ENCODE measurements at regions of chr11 and their contacts with region 1.

Region 1: DNA sequence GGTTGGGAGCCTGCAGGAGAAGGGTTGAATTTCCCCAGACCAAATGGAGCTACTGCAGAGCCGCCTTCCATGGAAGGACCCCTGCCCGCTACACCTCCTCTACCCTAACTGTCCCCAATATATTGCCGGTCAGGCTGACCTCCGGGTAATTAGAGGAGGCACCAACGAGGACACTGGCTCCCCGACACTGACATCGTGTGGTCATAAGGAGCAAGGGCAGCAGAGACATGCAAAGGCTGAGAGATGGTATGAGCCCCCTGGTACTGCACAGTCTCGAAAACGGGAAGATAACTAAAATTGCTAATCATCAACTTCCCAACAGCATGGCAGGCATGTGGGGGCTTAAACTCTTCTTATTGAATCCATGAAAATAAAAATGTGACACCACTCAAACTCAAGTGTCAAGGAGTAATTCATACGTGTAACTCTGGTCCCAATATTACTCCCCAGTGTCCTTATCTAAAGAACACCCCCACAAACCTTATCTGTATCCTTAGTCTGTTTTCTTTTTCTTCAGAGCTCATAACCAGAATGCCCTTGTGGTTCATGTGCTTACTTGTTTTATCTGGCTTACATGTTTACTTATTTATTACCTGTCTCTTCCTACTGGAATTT is 4.4 kb downstream of the CAVIN3 start:
- DNase-seq: peak; percentile 54 to 74 (median 59)
- ATAC-seq: peak in 3 of 4 donors; percentile 11 to 30 (median 18)
- H3K4me3 ChIP-seq: peak overlapping the region in 7 of 12 donors; percentile 6 to 42 (median 24)
- H3K27ac ChIP-seq: peak overlapping the region in 3 of 12 donors; percentile 14 to 52 (median 27)
- H3K4me1 ChIP-seq: peaks cover 0 to 42% (median 26%) of the 10 kb centered on the region in 12 donors
- H3K27me3 ChIP-seq: peaks cover 0 to 8% (median 0%) of the 10 kb centered on the region in 9 donors
- CTCF ChIP-seq: peak; percentile 75 to 92 (median 84)
- POLR2A ChIP-seq: no peak

Region 2: DNA sequence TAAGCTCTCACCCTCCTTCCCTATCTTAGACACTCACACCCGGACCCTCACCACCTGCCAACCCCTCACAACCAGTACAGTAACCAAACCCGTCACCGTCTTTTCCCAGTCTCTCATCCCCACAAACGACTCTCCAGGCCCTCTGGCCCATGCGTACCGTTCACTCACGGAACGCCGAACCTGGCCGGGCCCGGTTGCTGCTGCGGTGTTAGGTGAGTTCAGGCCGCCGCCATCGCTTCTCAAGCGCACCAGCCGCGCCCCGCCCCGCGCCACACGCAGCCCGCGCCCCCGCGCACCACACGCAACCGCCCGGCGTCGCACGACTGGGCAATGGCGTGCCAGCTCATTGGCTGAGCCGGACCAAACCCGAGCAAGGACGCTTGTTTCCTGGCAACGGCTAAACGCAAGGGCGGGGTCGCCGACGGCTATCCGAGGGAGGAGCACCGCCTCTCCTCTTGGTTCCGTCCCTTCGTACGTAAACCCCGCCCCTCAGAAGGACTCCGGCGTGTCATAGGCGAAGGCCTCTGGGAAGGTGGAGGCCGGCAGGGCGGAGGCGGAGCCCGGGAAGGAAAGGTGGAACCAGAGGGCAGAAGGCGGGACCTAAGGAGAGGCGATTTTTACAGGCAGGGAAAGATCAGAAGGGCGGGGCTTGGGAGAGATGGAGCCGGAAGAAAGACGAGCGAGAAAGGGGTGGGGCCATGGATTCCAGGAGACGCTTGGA is 81.4 kb before region 1 on chr11 and contains the start of gene FHIP1B:
- intact Hi-C with region 1: loop called in 5 of 10 experiments (anchors 2 to 5 kb)
- DNase-seq: peak; percentile 100
- ATAC-seq: peak; percentile 98 to 99 (median 99)
- H3K4me3 ChIP-seq: peak within 1 kb of the TSS; percentile 28 to 95 (median 83)
- H3K27ac ChIP-seq: peak within 1 kb of the TSS in 11 of 12 donors; percentile 74 to 91 (median 82)
- H3K4me1 ChIP-seq: peaks cover 0 to 36% (median 14%) of the 10 kb centered on the region in 12 donors
- H3K27me3 ChIP-seq: no peaks in the 10 kb centered on the region
- CTCF ChIP-seq: no peak
- POLR2A ChIP-seq: peak in 1 of 2 donors; percentile 45
- total RNA-seq, gene FHIP1B: 13.1 to 30.3 (median 16.3) TPM

Region 3: DNA sequence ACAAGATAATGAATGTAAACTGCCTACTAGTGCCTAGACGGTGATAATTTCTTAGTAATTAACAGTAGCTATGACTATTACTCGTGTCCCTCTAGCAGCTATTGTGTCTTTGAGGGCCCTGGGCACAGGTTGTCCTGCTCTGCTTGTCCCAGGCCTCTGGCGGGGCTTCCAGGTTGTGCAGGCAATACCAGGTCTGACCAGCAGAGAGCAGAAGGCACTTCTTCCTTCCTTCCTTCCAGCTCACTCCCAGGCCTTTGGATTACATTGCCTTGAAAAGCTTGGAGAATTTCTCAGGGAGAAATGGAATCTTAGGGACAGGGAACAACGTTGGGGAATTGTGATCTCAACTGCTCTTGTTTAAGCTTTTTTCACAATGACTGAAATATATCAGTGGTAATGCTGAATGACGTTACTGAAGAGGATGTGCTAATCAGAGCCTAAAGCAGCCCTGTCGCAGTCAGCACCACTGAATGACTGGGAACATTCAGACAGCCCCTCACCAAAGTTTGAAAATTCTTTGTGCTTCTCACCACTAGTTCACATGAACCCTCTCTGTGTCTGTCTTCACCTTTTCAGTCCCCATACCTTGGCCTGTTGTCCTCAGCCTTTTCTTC is 64.7 kb before region 1 on chr11:
- intact Hi-C with region 1: loop called in 6 of 10 experiments (anchors 1 to 10 kb)
- DNase-seq: peak; percentile 49 to 72 (median 59)
- ATAC-seq: peak; percentile 83 to 94 (median 88)
- H3K4me3 ChIP-seq: no peak overlapping the region
- H3K27ac ChIP-seq: peak overlapping the region in 4 of 12 donors; percentile 9 to 70 (median 30)
- H3K4me1 ChIP-seq: peaks cover 0 to 23% (median 2%) of the 10 kb centered on the region in 12 donors
- H3K27me3 ChIP-seq: peaks cover 0 to 14% (median 0%) of the 10 kb centered on the region in 9 donors
- CTCF ChIP-seq: peak; percentile 63 to 87 (median 80)
- POLR2A ChIP-seq: no peak

Region 4: DNA sequence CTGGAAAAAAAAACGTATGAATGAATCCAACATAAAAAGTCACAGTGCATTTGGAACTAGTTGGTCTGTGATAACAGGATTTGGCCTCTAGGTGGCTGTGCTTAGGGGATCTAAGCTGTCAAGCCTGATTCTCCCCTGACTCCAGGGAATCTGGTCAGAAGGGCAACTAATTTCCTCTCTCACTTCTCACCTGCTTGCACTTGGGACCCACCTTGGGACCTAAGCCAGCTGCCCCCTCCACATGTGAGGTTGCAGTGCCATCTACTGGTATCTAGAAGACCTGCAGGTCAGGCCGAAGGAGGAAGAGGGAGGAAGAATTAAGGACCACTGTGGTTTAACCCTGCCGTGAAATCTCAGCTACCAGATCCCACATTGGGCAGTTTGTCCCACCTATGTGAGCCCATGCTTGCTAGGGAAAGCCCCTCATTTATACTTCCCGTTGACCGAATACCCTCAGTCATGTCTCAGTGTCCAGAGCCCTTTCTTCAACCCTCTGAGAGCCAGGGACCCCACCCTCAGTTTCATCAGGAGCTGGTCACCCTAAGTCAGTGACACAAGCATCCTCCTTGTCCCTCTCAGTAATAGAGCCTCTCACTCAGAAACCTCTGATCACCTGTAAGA is 37.6 kb after region 1 on chr11:
- intact Hi-C with region 1: loop called in 5 of 10 experiments (anchors 5 kb)
- DNase-seq: peak in 4 of 5 donors; percentile 35 to 44 (median 41)
- ATAC-seq: peak in 3 of 4 donors; percentile 42 to 64 (median 58)
- H3K4me3 ChIP-seq: no peak overlapping the region
- H3K27ac ChIP-seq: no peak overlapping the region
- H3K4me1 ChIP-seq: peaks cover 0 to 9% (median 0%) of the 10 kb centered on the region in 12 donors
- H3K27me3 ChIP-seq: no peaks in the 10 kb centered on the region
- CTCF ChIP-seq: peak; percentile 90 to 99 (median 96)
- POLR2A ChIP-seq: no peak

Region 5: GRCh38 chr11:6362873-6363678 is 47.2 kb after region 1 on chr11:
- intact Hi-C with region 1: loop called in 3 of 10 experiments (anchors 2 to 5 kb)
- DNase-seq: peak; percentile 79 to 90 (median 87)
- ATAC-seq: peak; percentile 89 to 92 (median 92)
- H3K4me3 ChIP-seq: peak overlapping the region in 4 of 12 donors; percentile 18 to 31 (median 24)
- H3K27ac ChIP-seq: peak overlapping the region; percentile 66 to 97 (median 78)
- H3K4me1 ChIP-seq: peaks cover 0 to 16% (median 0%) of the 10 kb centered on the region in 12 donors
- H3K27me3 ChIP-seq: no peaks in the 10 kb centered on the region
- CTCF ChIP-seq: peak; percentile 78 to 92 (median 88)
- POLR2A ChIP-seq: no peak

Region 6: GRCh38 chr11:6746086-6746618 is 430.2 kb after region 1 on chr11:
- intact Hi-C with region 1: no loop called
- DNase-seq: peak in 2 of 5 donors; percentile 23 to 24
- ATAC-seq: peak in 2 of 4 donors; percentile 42 to 86
- H3K4me3 ChIP-seq: peak overlapping the region; percentile 12 to 65 (median 47)
- H3K27ac ChIP-seq: peak overlapping the region; percentile 56 to 98 (median 78)
- H3K4me1 ChIP-seq: peaks cover 0 to 49% (median 2%) of the 10 kb centered on the region in 12 donors
- H3K27me3 ChIP-seq: no peaks in the 10 kb centered on the region
- CTCF ChIP-seq: no peak
- POLR2A ChIP-seq: no peak

Measured in heart left ventricle (tissue), 16 donors.